ENCODE measurements at regions of chr10 and their contacts with region 1.

Region 1: DNA sequence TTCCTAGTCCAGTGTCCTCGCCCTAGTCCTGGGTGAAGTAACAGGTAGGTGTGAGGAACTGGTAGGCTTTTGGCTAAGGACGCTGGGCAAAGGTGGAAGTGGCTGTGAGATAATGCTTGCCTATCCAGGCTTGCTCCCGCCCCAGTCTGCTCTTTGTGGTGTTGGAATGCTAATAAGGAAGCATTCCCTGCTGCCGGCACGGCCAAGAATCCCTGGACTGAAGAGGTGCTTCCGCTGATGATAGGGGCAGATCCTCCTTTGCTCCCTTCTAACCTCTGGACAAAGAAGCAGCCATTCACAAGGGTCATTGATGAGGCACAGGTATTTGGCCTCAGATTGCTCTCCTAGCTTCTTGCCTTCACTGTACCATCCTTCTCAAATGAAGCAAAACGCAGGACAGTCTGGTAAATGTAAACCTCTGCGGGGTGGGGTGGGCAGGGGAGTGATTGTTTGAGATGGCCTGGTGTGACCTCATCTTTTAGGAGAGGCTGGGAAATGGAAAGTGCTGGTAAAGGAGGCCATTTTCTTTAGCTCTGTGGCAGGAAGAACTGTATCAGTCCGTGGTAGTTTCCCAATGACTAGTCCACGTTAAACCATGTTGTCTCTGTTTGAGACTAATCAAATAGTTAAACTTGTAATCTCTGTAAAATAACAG is 1.7 kb downstream of the PGAM1 start:
- DNase-seq: no peak
- ATAC-seq: peak in 3 of 4 donors; percentile 0 to 18 (median 2)
- H3K4me3 ChIP-seq: peak overlapping the region in 11 of 12 donors; percentile 17 to 99 (median 83)
- H3K27ac ChIP-seq: peak overlapping the region in 11 of 12 donors; percentile 78 to 96 (median 93)
- H3K4me1 ChIP-seq: peaks cover 3 to 54% (median 27%) of the 10 kb centered on the region in 12 donors
- H3K27me3 ChIP-seq: no peaks in the 10 kb centered on the region
- CTCF ChIP-seq: no peak
- POLR2A ChIP-seq: no peak

Region 2: DNA sequence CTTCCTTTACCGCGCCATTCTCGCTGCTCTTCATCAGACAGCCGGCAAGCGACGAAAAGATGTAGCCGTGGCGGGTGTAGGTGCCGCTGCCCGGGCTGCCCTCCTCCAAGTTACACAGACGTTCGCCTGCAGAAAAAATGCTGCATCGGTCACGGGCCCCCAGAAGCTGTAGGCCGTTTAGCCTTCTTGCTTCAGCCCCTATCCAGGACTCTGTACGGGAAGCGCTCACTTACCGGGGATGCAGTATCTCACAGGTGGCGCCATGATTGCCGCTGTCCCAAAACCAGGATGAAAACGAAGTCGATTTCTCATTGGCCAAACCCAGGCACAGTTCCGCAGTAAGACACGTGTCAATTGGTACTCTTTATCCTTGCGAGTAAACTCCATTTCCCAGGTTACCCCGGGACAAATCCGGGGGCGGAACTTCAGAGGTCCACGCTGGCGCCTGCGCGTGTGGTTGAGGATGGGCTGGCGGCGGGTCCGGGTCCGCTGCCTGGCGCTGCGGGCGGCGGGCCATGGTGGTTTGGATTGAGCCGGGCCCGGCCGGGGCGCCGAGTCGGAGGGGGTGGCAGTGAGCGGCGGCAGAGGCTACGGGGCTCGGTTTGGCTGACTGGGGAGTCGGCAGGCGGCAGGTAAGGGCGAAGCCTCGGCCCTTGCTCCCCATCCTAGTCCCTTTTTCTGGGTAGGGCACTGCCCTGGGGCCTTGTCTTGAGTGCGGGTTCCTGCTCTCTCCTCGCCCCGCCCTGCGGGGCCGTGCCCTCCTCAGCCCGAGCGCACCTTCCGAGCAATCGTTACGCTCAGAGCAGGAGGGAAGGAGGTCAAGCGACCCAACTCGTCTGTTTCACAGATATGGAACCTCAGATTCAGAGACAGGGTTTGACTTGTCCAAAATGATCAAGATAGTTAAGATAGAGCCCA is 18.3 kb after region 1 on chr10 and contains the starts of genes EXOSC1 and ZDHHC16:
- intact Hi-C with region 1: loop called in 1 of 10 experiments (anchors 2 kb)
- DNase-seq: peak; percentile 92 to 94 (median 93)
- ATAC-seq: peak; percentile 97 to 98 (median 98)
- H3K4me3 ChIP-seq: peak within 1 kb of the TSS; percentile 62 to 96 (median 89)
- H3K27ac ChIP-seq: peak within 1 kb of the TSS; percentile 27 to 83 (median 72)
- H3K4me1 ChIP-seq: peaks cover 4 to 46% (median 35%) of the 10 kb centered on the region in 12 donors
- H3K27me3 ChIP-seq: no peaks in the 10 kb centered on the region
- CTCF ChIP-seq: peak in 4 of 12 donors; percentile 9 to 39 (median 24)
- POLR2A ChIP-seq: peak in 1 of 2 donors; percentile 81
- total RNA-seq, gene EXOSC1: 14.8 to 24.6 (median 16.9) TPM
- total RNA-seq, gene ZDHHC16: 16.2 to 36.8 (median 25.2) TPM